ENCODE measurements at regions of chr20 and their contacts with region 1.

Region 1: DNA sequence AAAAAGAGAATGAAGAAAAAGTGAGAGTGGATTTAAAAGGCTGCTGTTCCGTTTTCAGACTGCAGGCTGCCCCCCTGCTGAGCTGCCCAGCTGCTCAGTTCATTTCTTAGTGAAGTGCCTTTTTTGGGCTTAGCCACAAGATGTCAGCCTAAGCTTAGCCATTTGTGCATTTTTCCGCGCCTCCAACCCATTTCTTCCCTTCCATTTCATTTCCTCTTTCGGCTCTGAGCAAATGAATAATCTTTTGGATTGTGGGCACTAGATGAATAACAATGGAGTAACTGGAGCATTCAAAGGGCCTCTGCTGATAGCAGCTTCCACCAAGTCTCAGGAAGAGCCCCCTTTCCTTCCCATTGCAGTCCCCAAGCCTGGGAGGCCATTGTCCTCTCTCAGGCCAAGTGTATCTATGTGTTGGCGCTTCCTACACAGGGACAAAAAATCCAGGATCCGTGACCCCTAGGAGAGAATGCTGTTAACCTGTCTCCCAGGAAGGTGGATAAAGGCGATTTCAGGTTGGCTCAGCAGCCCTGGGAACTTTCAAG is 83.5 kb upstream of the SPTLC3 start:
- DNase-seq: peak; percentile 13
- ATAC-seq: peak; percentile 98
- H3K4me3 ChIP-seq: no peak overlapping the region
- H3K27ac ChIP-seq: no peak overlapping the region
- H3K4me1 ChIP-seq: no peaks in the 10 kb centered on the region
- H3K27me3 ChIP-seq: no peaks in the 10 kb centered on the region; a peak in 1 of 4 replicates
- CTCF ChIP-seq: peak; percentile 74 to 94 (median 84); a peak in 5 of 6 replicates
- EP300 ChIP-seq: no peak
- POLR2A ChIP-seq: no peak
- RAD21 ChIP-seq: peak; percentile 86

Region 2: GRCh38 chr20:12970372-12970821 is 45.1 kb after region 1 on chr20:
- CTCF ChIA-PET with region 1: interaction called, 6 read pairs
- POLR2A ChIA-PET with region 1: no interaction called
- RAD21 ChIA-PET with region 1: no interaction called
- SMC1A ChIA-PET with region 1: interaction called, 6 read pairs
- in situ Hi-C with region 1: no loop called
- intact Hi-C with region 1: loop called (anchors 1 kb)
- DNase-seq: no peak
- ATAC-seq: peak; percentile 52; the same call in 1 of the 3 replicates
- H3K4me3 ChIP-seq: no peak overlapping the region
- H3K27ac ChIP-seq: no peak overlapping the region
- H3K4me1 ChIP-seq: no peaks in the 10 kb centered on the region
- H3K27me3 ChIP-seq: no peaks in the 10 kb centered on the region
- CTCF ChIP-seq: peak; percentile 28 to 56 (median 48); a peak in 5 of 6 replicates
- EP300 ChIP-seq: no peak
- POLR2A ChIP-seq: no peak
- RAD21 ChIP-seq: peak; percentile 69

Region 3: GRCh38 chr20:13111249-13111911 is 186.1 kb after region 1 on chr20:
- CTCF ChIA-PET with region 1: interaction called, 37 read pairs
- POLR2A ChIA-PET with region 1: no interaction called
- RAD21 ChIA-PET with region 1: interaction called, 5 read pairs
- SMC1A ChIA-PET with region 1: interaction called, 9 read pairs
- in situ Hi-C with region 1: no loop called
- intact Hi-C with region 1: loop called (anchors 1 kb)
- DNase-seq: no peak
- ATAC-seq: no peak
- H3K4me3 ChIP-seq: no peak overlapping the region
- H3K27ac ChIP-seq: no peak overlapping the region
- H3K4me1 ChIP-seq: no peaks in the 10 kb centered on the region
- H3K27me3 ChIP-seq: no peaks in the 10 kb centered on the region; a peak in 1 of 4 replicates
- CTCF ChIP-seq: no peak
- EP300 ChIP-seq: no peak
- POLR2A ChIP-seq: no peak
- RAD21 ChIP-seq: no peak

Region 4: GRCh38 chr20:13302647-13303450 is 377.6 kb after region 1 on chr20:
- CTCF ChIA-PET with region 1: interaction called, 3 read pairs
- POLR2A ChIA-PET with region 1: no interaction called
- RAD21 ChIA-PET with region 1: no interaction called
- SMC1A ChIA-PET with region 1: no interaction called
- in situ Hi-C with region 1: loop called (anchors 10 kb)
- intact Hi-C with region 1: no loop called
- DNase-seq: no peak
- ATAC-seq: peak; percentile 99
- H3K4me3 ChIP-seq: no peak overlapping the region
- H3K27ac ChIP-seq: no peak overlapping the region
- H3K4me1 ChIP-seq: no peaks in the 10 kb centered on the region
- H3K27me3 ChIP-seq: no peaks in the 10 kb centered on the region
- CTCF ChIP-seq: peak; percentile 55 to 83 (median 70)
- EP300 ChIP-seq: no peak
- POLR2A ChIP-seq: no peak
- RAD21 ChIP-seq: peak; percentile 64

Region 5: GRCh38 chr20:13784893-13785715 is 859.8 kb after region 1 on chr20 and contains the starts of genes ESF1 and NDUFAF5:
- CTCF ChIA-PET with region 1: interaction called, 13 read pairs
- POLR2A ChIA-PET with region 1: no interaction called
- RAD21 ChIA-PET with region 1: interaction called, 5 read pairs
- SMC1A ChIA-PET with region 1: no interaction called
- in situ Hi-C with region 1: no loop called
- intact Hi-C with region 1: loop called (anchors 5 kb)
- DNase-seq: peak; percentile 95
- ATAC-seq: peak; percentile 93
- H3K4me3 ChIP-seq: peak within 1 kb of the TSS; percentile 99
- H3K27ac ChIP-seq: peak within 1 kb of the TSS; percentile 80
- H3K4me1 ChIP-seq: peaks cover 5% of the 10 kb centered on the region
- H3K27me3 ChIP-seq: no peaks in the 10 kb centered on the region
- CTCF ChIP-seq: no peak
- EP300 ChIP-seq: no peak
- POLR2A ChIP-seq: peak; percentile 40
- RAD21 ChIP-seq: no peak
- polyA plus RNA-seq, gene ESF1: 20.2 to 27.6 TPM
- polyA plus RNA-seq, gene NDUFAF5: 24.7 to 27.5 TPM